ENCODE measurements at regions of chr21 and their contacts with region 1.

Region 1: DNA sequence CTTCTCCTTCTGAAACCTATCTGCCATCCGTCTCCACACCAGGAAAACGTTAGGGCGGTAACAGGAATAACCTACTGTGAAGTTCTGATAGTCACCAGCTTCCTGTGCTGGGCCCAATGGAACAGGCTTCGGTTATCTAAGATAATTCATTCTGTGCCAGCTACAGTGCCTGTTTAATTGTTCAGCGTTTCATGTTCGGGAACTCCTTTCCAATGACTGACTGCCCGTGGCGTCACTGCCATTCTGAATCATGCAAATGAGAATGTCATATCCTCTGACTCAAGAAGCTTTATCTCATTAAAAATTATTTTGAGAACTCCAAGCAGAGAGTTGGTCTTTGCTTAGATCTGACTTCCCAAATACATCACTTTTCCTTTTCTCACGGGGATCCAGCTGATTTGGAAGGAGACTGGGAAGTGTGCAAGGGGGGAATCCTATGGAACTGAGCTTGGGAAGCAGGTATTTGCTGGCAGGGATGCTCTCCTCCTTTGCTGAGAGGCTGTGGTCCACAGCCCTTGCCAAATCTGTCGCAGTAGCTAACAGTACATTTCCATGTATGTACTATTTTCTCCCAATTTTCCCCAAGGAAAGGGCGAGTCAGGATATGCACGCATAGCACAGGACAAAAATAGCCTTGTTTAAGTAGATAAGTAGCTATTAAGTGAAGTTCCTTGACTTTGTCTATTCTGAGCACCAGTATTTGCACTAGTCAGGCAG is 358.7 kb downstream of the LTN1 start:
- DNase-seq: peak; percentile 64 to 80 (median 78)
- ATAC-seq: peak; percentile 81 to 94
- H3K4me3 ChIP-seq: no peak overlapping the region
- H3K27ac ChIP-seq: peak overlapping the region; percentile 95
- H3K4me1 ChIP-seq: peaks cover 7% of the 10 kb centered on the region
- H3K27me3 ChIP-seq: no peaks in the 10 kb centered on the region

Region 2: DNA sequence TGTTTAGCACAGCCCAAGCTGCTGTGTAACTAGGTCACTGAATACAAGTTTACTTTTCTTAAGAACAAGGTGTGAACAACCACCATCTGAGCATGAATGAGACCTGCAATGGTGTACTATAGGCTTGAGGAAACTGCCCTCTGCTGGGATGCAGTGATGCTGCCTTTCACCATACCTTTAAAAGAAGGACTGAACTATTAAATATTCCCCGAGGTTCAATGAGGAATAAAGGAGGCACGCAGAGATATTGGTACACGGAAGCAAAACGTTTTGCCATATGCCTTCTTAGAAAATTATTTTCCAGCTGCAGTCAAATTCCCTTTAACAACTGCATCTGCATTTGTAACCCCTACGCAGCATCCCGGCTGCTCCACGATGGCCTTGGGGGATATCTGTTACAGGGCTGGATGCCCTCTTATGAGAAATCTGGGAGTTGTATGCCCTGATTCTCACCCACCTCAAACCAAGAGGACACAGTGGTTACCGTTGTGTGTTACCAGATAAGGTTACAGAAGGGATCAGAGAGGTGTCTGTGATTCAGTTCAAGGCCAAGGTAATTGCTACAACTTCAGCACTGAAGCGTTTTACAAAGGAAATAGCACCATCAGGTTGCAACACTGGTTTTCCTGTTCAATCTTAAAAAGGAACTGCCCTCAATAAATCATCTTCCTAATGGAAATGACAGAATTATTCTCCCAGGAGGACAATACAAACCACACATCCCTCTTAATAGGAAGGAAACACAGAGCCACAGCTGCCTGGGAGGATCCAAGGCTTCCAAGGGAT is 111.8 kb before region 1 on chr21:
- intact Hi-C with region 1: loop called in 1 of 4 experiments (anchors 10 kb)
- DNase-seq: peak in 2 of 3 donors; percentile 8 to 27
- ATAC-seq: peak; percentile 64 to 82
- H3K4me3 ChIP-seq: no peak overlapping the region
- H3K27ac ChIP-seq: peak overlapping the region; percentile 7
- H3K4me1 ChIP-seq: peaks cover 1% of the 10 kb centered on the region
- H3K27me3 ChIP-seq: no peaks in the 10 kb centered on the region

Region 3: GRCh38 chr21:28669321-28669720 is 35.3 kb after region 1 on chr21:
- intact Hi-C with region 1: no loop called
- DNase-seq: no peak
- ATAC-seq: no peak
- H3K4me3 ChIP-seq: no peak overlapping the region
- H3K27ac ChIP-seq: no peak overlapping the region
- H3K4me1 ChIP-seq: peaks cover 2% of the 10 kb centered on the region
- H3K27me3 ChIP-seq: no peaks in the 10 kb centered on the region

Region 4: DNA sequence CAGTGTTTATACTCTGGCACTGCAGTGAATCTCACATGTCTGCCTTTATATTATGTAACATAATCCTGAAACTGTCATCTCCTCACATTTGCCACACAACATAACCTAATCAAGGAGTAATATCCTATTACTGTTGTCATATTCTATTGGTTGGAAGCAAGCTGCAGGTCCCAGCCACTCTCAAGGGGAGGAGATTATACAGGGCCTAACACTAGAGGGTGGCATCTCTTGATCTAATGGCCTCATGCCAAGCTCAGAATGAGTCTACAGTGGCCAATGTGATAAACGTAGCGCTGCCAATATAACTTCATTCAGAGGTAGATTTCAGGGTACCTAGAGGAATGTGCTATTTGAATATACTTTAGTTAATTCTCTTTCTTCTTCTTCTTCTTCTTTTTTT is 831.5 kb after region 1 on chr21:
- intact Hi-C with region 1: no loop called
- DNase-seq: no peak
- ATAC-seq: no peak
- H3K4me3 ChIP-seq: no peak overlapping the region
- H3K27ac ChIP-seq: no peak overlapping the region
- H3K4me1 ChIP-seq: no peaks in the 10 kb centered on the region
- H3K27me3 ChIP-seq: no peaks in the 10 kb centered on the region

Measured in right cardiac atrium (tissue), 5 donors.